GM13976 (cell line): ENCODE measurements at regions of chr2 and their contacts with region 1.

Region 1: GRCh38 chr2:162217598-162217997 is 25.6 kb downstream of the FAP start:
- DNase-seq: no peak
- CTCF ChIP-seq: no peak

Region 2: DNA sequence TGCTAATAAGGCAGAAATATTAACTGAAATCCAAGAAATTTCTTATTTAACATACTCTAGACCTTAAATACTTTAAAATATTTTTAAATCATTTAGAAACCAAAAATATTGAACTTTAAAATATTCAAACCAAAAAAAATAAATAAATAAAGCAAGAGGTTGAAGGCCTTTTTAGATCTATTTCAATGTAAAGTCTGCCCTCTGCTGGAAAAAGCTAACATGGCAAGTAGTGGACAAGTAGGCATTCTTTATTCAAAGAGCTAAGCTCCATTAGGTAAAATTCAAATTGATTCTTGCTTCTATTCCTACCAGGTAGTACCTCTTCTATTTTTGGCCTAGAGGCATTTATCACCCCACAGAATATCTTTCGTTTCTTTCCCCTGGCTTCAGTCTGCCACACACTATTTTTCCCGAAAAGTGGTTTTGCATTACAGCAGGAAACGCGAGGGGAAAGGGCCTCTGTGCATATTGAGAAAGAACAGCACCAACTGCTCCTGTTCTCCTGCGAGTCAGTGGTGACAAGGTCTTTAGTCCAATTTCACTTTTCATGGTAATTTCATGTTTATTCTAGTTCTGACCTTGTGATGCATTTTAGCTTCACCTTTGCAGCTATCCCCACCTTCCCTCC is 80.4 kb after region 1 on chr2:
- in situ Hi-C with region 1: loop called (anchors 5 kb)
- DNase-seq: no peak
- CTCF ChIP-seq: peak; percentile 50

Region 3: GRCh38 chr2:162828544-162828943 is 610.9 kb after region 1 on chr2:
- in situ Hi-C with region 1: no loop called
- DNase-seq: no peak
- CTCF ChIP-seq: no peak